ENCODE measurements at regions of chr7 and their contacts with region 1.

Region 1: DNA sequence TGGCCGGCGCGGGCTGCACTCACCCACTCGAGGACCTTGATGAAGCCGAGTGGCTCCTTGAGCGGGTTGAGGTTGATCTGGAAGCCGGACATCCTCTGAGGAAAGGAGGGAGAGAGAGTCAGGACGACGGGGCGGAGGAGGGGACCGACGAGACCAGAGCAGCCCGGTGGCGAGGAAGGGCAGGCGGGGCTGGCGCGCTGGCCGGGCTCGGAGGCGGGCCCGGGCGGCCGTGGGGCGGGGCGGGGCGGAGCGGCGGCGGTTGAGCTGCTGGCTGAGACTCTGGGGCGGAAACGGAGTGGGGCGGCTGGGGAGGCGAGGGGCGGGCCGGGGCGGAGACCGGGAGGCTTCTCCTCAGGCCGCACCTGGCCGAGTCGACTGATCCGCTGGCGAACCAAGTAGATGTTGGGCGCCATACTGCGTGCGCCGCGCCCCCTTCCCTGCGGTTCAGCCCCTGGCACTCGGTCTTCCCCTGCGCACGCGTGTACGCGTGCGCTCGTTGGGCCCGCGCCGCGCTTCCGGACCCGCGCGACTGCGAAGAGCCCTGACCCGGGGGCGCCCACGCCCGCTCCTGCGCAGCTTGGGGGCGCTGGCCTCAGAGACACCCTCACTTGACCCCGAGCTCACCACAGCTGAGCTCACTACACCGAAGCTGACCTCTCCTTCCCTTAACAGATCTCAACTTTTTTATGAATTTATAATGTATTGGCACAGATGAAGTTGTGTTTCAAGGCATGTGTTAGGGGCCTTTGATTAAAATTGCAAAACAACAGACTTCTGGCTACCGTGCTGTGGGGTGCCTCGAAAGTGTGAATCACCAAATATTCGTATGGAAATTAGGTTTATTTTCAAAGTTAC is at the start of gene SYPL1:
- DNase-seq: peak; percentile 87
- H3K4me3 ChIP-seq: peak within 1 kb of the TSS; percentile 81 to 97 (median 88)
- H3K27ac ChIP-seq: peak within 1 kb of the TSS; percentile 79
- H3K4me1 ChIP-seq: peaks cover 12% of the 10 kb centered on the region
- H3K27me3 ChIP-seq: no peaks in the 10 kb centered on the region
- CTCF ChIP-seq: no peak
- POLR2A ChIP-seq: peak; percentile 87
- total RNA-seq, gene SYPL1: 66.6 and 67.1 TPM in 2 replicates

Region 2: DNA sequence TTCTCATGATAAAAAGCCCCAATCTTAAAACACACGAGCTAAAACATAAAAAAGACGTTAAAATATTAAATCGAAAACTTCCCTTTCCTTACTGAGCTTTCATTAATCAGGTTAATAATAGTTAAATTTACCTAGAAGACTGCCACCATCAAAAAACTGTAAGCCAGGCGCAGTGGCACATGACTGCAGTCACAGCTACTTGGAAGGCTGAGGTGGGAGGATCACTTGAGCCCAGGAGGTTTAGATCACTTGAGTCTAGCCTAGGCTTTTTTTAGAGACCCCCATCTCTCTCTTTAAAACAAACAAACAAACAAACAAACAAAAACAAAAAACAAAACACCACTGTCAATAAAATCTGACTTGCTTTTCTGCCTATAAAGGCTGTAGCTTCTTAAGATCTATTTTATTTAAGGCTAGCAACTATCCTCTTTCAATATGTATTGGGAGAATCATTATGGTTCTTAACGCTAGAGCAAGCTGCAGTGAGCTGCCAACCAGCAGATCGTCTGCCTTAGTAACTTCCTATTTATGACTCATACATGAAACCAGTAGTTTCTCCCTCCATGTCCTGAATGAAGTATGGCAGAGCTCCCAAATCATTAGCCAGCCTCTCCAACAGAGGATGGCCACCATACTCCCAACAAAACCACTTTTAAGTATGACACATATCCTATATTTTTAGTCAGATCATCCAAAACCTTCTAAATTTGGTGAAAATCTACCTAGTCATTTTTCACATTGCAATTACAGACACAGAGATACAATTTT is 887.3 kb before region 1 on chr7:
- CTCF ChIA-PET with region 1: no interaction called
- POLR2A ChIA-PET with region 1: no interaction called
- dilution Hi-C with region 1: no loop called
- intact Hi-C with region 1: no loop called
- DNase-seq: peak; percentile 85
- H3K4me3 ChIP-seq: no peak overlapping the region
- H3K27ac ChIP-seq: peak overlapping the region; percentile 26
- H3K4me1 ChIP-seq: peaks cover 13% of the 10 kb centered on the region
- H3K27me3 ChIP-seq: no peaks in the 10 kb centered on the region
- CTCF ChIP-seq: no peak
- POLR2A ChIP-seq: no peak

Region 3: GRCh38 chr7:106064771-106065585 is 47.4 kb before region 1 on chr7:
- CTCF ChIA-PET with region 1: interaction called, 3 read pairs
- POLR2A ChIA-PET with region 1: no interaction called
- dilution Hi-C with region 1: no loop called
- intact Hi-C with region 1: loop called (anchors 2 kb)
- DNase-seq: peak; percentile 88
- H3K4me3 ChIP-seq: no peak overlapping the region
- H3K27ac ChIP-seq: no peak overlapping the region
- H3K4me1 ChIP-seq: peaks cover 17% of the 10 kb centered on the region
- H3K27me3 ChIP-seq: no peaks in the 10 kb centered on the region
- CTCF ChIP-seq: no peak
- POLR2A ChIP-seq: peak; percentile 21

Region 4: GRCh38 chr7:106071356-106071998 is 40.9 kb before region 1 on chr7:
- CTCF ChIA-PET with region 1: interaction called, 13 read pairs
- POLR2A ChIA-PET with region 1: interaction called, 7 read pairs
- dilution Hi-C with region 1: no loop called
- intact Hi-C with region 1: no loop called
- DNase-seq: peak; percentile 79
- H3K4me3 ChIP-seq: no peak overlapping the region
- H3K27ac ChIP-seq: peak overlapping the region; percentile 60
- H3K4me1 ChIP-seq: peaks cover 20% of the 10 kb centered on the region
- H3K27me3 ChIP-seq: no peaks in the 10 kb centered on the region
- CTCF ChIP-seq: no peak
- POLR2A ChIP-seq: no peak

Region 5: DNA sequence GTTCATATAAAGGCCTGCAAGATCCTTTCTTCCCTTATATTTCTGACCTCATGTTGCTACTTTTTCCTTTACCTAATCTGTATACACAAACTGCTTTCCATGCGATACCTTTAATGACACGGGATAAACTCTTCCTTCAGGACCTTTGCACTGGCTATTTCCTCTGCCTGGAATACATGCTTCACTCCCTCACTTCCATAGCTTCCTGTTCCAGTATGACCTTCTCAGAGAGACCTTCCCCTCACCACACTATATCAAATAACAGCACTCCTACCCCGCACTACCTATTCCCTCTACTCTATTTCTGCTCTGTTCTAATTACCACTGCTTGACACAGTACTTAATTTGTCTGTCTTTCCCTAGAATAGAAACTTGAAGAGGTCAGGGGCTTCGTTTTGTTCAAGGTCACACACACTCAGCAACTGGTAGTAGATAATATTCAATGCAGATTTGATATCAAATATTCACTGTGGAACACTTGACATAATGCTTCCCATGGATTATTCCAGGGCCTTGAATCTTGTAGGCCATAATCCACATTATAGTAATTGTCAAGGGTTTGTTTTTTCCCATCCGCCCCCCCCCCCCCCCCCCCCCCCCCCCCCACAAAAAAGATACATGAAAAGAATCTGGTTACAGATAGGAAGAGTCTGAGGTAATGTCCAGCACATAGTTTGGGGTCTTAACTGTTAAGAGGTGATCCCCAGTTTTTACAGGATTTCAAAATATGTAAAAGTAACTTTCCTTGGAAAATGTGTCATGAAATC is 11.3 kb before region 1 on chr7:
- CTCF ChIA-PET with region 1: interaction called, 10 read pairs
- POLR2A ChIA-PET with region 1: interaction called, 3 read pairs
- dilution Hi-C with region 1: no loop called
- intact Hi-C with region 1: no loop called
- DNase-seq: peak; percentile 51
- H3K4me3 ChIP-seq: no peak overlapping the region
- H3K27ac ChIP-seq: no peak overlapping the region
- H3K4me1 ChIP-seq: peaks cover 16% of the 10 kb centered on the region
- H3K27me3 ChIP-seq: no peaks in the 10 kb centered on the region
- CTCF ChIP-seq: no peak
- POLR2A ChIP-seq: no peak